IMR-90 (cell line): ENCODE measurements at regions of chr13 and their contacts with region 1.

Region 1: GRCh38 chr13:23466144-23467002 is 32.9 kb upstream of the SACS start:
- DNase-seq: peak; percentile 86
- ATAC-seq: peak; percentile 89
- H3K4me3 ChIP-seq: peak overlapping the region; percentile 41
- H3K27ac ChIP-seq: peak overlapping the region; percentile 98
- H3K4me1 ChIP-seq: peaks cover 15% of the 10 kb centered on the region
- H3K27me3 ChIP-seq: no peaks in the 10 kb centered on the region
- CTCF ChIP-seq: peak; percentile 79
- POLR2A ChIP-seq: 0 out of 2 replicates have a peak, but pooled peaks have one; percentile 27
- RAD21 ChIP-seq: peak; percentile 84

Region 2: DNA sequence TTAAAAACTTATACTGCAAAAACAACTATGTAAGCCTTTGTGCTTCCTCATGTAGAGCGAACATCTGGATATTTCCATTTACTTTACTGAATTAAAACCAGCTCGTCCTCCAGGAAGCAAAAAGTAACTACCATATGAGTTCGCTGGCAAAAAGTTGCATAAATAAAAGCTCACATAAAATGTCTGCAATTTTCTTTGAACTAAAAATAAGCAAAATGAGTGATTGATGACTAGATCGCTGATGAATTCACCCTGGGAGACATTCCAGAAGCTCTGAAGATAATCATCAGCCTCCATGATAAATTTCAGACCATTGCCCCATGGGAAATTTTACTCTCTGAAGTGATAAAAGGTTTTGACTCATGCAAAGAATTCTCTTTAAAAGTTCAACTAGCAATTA is 34.5 kb after region 1 on chr13:
- CTCF ChIA-PET with region 1: no interaction called
- POLR2A ChIA-PET with region 1: no interaction called
- dilution Hi-C with region 1: no loop called
- in situ Hi-C with region 1: no loop called
- intact Hi-C with region 1: loop called (anchors 5 kb)
- DNase-seq: peak; percentile 96
- ATAC-seq: peak; percentile 59
- H3K4me3 ChIP-seq: no peak overlapping the region
- H3K27ac ChIP-seq: peak overlapping the region; percentile 45; the same call in 1 of the 2 replicates
- H3K4me1 ChIP-seq: peaks cover 21% of the 10 kb centered on the region
- H3K27me3 ChIP-seq: no peaks in the 10 kb centered on the region
- CTCF ChIP-seq: no peak
- POLR2A ChIP-seq: no peak
- RAD21 ChIP-seq: no peak

Region 3: GRCh38 chr13:23570099-23570920 is 103.9 kb after region 1 on chr13 and contains the start of gene TNFRSF19:
- CTCF ChIA-PET with region 1: interaction called, 3 read pairs
- POLR2A ChIA-PET with region 1: no interaction called
- dilution Hi-C with region 1: no loop called
- in situ Hi-C with region 1: loop called (anchors 5 kb)
- intact Hi-C with region 1: loop called (anchors 1 kb)
- DNase-seq: peak; percentile 91
- ATAC-seq: peak; percentile 84
- H3K4me3 ChIP-seq: peak within 1 kb of the TSS; percentile 53
- H3K27ac ChIP-seq: peak within 1 kb of the TSS; percentile 48
- H3K4me1 ChIP-seq: peaks cover 2% of the 10 kb centered on the region; the same call in 1 of the 2 replicates
- H3K27me3 ChIP-seq: no peaks in the 10 kb centered on the region
- CTCF ChIP-seq: no peak
- POLR2A ChIP-seq: no peak
- RAD21 ChIP-seq: no peak
- total RNA-seq, gene TNFRSF19: 18.6 and 21.9 TPM in 2 replicates

Region 4: DNA sequence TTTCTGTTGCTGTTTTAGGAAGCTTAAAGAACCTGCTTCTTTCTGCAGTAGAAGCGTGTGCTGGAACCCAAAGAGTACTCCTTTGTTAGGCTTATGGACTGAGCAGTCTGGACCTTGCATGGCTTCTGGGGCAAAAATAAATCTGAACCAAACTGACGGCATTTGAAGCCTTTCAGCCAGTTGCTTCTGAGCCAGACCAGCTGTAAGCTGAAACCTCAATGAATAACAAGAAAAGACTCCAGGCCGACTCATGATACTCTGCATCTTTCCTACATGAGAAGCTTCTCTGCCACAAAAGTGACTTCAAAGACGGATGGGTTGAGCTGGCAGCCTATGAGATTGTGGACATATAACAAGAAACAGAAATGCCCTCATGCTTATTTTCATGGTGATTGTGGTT is 207.0 kb after region 1 on chr13:
- CTCF ChIA-PET with region 1: no interaction called
- POLR2A ChIA-PET with region 1: no interaction called
- dilution Hi-C with region 1: no loop called
- in situ Hi-C with region 1: no loop called
- intact Hi-C with region 1: loop called (anchors 1 kb)
- DNase-seq: peak; percentile 99
- ATAC-seq: peak; percentile 64
- H3K4me3 ChIP-seq: no peak overlapping the region
- H3K27ac ChIP-seq: peak overlapping the region; percentile 100; the same call in 1 of the 2 replicates
- H3K4me1 ChIP-seq: peaks cover 39% of the 10 kb centered on the region
- H3K27me3 ChIP-seq: no peaks in the 10 kb centered on the region
- CTCF ChIP-seq: no peak
- POLR2A ChIP-seq: peak; percentile 88
- RAD21 ChIP-seq: peak; percentile 41

Region 5: DNA sequence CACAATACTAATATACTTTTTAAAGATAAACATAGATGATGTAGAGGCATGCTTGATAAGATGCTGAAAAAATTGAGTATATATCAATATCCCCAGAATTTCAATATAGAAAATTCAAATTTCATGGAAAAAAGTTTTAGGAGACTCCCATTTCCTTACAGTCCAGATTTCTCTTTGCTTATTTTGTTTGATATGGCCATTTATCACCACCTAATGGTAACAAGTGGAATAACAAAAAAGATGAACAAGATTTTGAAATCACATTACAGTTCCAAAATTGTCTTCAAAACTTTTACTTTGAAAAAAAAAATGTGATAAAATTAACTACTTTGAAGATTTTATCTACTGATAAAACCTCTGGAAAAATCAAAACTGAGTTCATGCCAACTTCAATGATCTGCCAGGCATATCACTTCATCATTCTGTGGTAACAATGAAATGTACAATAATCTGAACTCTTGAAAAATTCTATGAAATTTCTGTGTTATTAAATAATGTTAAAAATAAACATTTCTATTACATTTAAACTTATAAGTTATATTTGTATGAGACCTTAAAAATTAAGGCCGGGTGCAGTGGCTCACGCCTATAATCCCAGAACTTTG is 405.3 kb after region 1 on chr13:
- CTCF ChIA-PET with region 1: interaction called, 5 read pairs
- POLR2A ChIA-PET with region 1: no interaction called
- dilution Hi-C with region 1: no loop called
- in situ Hi-C with region 1: loop called (anchors 5 kb)
- intact Hi-C with region 1: loop called (anchors 1 kb)
- DNase-seq: peak; percentile 59
- ATAC-seq: no peak
- H3K4me3 ChIP-seq: no peak overlapping the region
- H3K27ac ChIP-seq: peak overlapping the region; percentile 31; the same call in 1 of the 2 replicates
- H3K4me1 ChIP-seq: peaks cover 14% of the 10 kb centered on the region
- H3K27me3 ChIP-seq: no peaks in the 10 kb centered on the region
- CTCF ChIP-seq: peak; percentile 62
- POLR2A ChIP-seq: no peak
- RAD21 ChIP-seq: peak; percentile 76